H1 (cell line): ENCODE measurements at regions of chr21 and their contacts with region 1.

Region 1: GRCh38 chr21:42360317-42360716 is 6.0 kb downstream of the TFF1 start:
- DNase-seq: no peak
- H3K4me3 ChIP-seq: no peak overlapping the region
- H3K27ac ChIP-seq: no peak overlapping the region
- H3K4me1 ChIP-seq: no peaks in the 10 kb centered on the region
- H3K27me3 ChIP-seq: no peaks in the 10 kb centered on the region
- CTCF ChIP-seq: peak; percentile 60 to 70 (median 66)
- EP300 ChIP-seq: no peak
- POLR2A ChIP-seq: no peak
- RAD21 ChIP-seq: peak; percentile 64 to 75

Region 2: DNA sequence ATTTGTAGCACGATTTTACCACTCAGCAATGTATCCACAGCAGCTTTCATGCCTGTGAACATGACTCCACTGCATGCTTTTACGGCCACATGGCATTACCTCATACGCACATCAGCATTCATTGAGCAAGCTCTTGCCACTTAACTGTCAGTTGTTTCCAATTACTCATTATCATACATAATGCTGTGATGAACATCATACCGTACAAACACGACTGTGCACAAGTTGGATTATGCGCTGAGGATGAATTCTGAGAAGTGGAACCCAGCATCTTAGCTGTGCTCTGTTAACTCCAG is 279.6 kb before region 1 on chr21:
- CTCF ChIA-PET with region 1: no interaction called
- POLR2A ChIA-PET with region 1: no interaction called
- DNase-seq: no peak
- H3K4me3 ChIP-seq: no peak overlapping the region
- H3K27ac ChIP-seq: no peak overlapping the region
- H3K4me1 ChIP-seq: no peaks in the 10 kb centered on the region
- H3K27me3 ChIP-seq: no peaks in the 10 kb centered on the region
- CTCF ChIP-seq: no peak
- EP300 ChIP-seq: no peak
- POLR2A ChIP-seq: no peak
- RAD21 ChIP-seq: no peak

Region 3: GRCh38 chr21:42347601-42348327 is 12.6 kb before region 1 on chr21:
- CTCF ChIA-PET with region 1: interaction called, 22 read pairs
- POLR2A ChIA-PET with region 1: no interaction called
- DNase-seq: no peak
- H3K4me3 ChIP-seq: no peak overlapping the region
- H3K27ac ChIP-seq: no peak overlapping the region
- H3K4me1 ChIP-seq: no peaks in the 10 kb centered on the region
- H3K27me3 ChIP-seq: no peaks in the 10 kb centered on the region
- CTCF ChIP-seq: no peak
- EP300 ChIP-seq: no peak
- POLR2A ChIP-seq: no peak
- RAD21 ChIP-seq: no peak

Region 4: DNA sequence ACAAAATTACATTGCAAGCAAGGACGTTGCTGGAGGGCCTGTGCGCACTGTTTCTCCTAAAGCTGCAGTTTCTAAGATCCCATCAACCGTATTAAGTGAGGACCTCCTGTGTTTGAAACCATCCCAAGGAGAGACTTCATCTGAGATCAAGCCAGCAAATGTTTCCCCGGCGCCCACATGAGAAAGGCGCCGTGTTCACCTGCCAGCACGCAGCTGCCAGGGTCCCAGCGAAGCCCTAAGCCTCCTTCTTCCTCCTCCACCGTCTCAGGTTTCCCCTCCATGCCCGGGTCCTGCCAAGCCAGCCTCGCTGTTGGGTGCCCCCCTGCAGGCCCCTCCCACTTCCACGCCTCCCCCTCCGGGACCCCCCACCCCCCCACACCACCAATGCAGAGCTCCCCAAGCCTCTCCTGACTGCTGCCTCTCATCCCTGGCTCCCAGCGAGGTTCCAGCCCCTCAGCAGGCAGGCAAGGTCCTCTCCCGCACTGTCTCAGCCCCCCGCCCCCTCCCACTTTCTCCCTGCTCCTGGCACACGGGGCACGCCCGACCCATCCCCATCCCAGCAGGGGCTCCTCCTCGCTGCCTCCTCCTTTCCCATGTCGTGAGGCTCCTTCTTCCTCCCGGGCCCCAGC is 14.7 kb after region 1 on chr21:
- CTCF ChIA-PET with region 1: interaction called, 18 read pairs
- POLR2A ChIA-PET with region 1: interaction called, 3 read pairs
- DNase-seq: no peak
- H3K4me3 ChIP-seq: no peak overlapping the region
- H3K27ac ChIP-seq: no peak overlapping the region
- H3K4me1 ChIP-seq: peaks cover 0 to 7% (median 0%) of the 10 kb centered on the region in 4 experiments; a peak in 5 of 7 replicates
- H3K27me3 ChIP-seq: peaks cover 0 to 2% (median 0%) of the 10 kb centered on the region in 4 experiments; a peak in 1 of 7 replicates
- CTCF ChIP-seq: no peak
- EP300 ChIP-seq: no peak
- POLR2A ChIP-seq: no peak
- RAD21 ChIP-seq: no peak